ENCODE measurements at regions of chr1 and their contacts with region 1.

Region 1: DNA sequence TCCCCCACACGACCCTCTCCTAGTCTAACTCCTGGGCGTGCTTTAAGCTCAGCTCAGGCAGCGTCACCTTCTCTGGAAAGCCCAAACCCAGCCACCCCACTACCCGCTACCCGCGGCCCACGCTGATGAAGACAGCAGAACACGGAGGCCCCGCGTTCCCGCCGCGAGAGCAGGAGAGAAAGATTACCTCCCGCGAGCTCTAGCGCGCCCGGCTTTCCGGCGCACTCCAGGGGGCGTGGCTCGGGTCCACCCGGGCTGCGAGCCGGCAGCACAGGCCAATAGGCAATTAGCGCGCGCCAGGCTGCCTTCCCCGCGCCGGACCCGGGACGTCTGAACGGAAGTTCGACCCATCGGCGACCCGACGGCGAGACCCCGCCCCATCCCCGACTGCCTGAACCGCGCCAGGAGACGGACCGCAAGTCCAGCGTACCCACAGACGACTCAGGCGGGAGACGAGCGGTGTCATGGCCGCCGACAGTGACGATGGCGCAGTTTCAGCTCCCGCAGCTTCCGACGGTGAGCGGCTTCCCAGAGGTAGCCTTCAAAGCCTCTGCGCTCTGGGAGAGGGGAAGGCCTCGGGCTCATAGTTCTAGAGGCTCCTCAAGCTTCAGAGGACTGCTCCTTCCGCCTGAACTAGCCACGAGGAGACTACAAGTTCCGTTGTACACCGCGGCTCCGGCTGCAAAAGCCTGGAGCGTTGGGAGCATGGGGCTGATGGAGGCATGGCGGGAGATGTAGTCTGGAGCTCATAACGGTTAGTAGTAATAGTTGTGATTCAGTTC is at the starts of genes MUTYH and TOE1:
- DNase-seq: peak; percentile 88 to 95
- H3K4me3 ChIP-seq: peak within 1 kb of the TSS; percentile 84 to 97 (median 92)
- H3K27ac ChIP-seq: peak within 1 kb of the TSS; percentile 97
- H3K4me1 ChIP-seq: peaks cover 0 to 9% (median 6%) of the 10 kb centered on the region in 4 experiments; a peak in 6 of 7 replicates
- H3K27me3 ChIP-seq: no peaks in the 10 kb centered on the region
- CTCF ChIP-seq: no peak
- EP300 ChIP-seq: no peak
- POLR2A ChIP-seq: peak; percentile 94 to 96
- RAD21 ChIP-seq: no peak
- total RNA-seq, gene MUTYH: 51.9 TPM in 2 replicates
- total RNA-seq, gene TOE1: 14.5 and 15.2 TPM in 2 replicates

Region 2: GRCh38 chr1:45326627-45327623 is 13.1 kb before region 1 on chr1 and contains the start of gene HPDL:
- CTCF ChIA-PET with region 1: interaction called, 21 read pairs
- POLR2A ChIA-PET with region 1: interaction called, 472 read pairs
- DNase-seq: peak; percentile 64 to 85
- H3K4me3 ChIP-seq: peak within 1 kb of the TSS; percentile 61 to 69 (median 64)
- H3K27ac ChIP-seq: peak within 1 kb of the TSS; percentile 65; the same call in 1 of the 2 replicates
- H3K4me1 ChIP-seq: peaks cover 8 to 24% (median 14%) of the 10 kb centered on the region in 4 experiments; a peak in 6 of 7 replicates
- H3K27me3 ChIP-seq: no peaks in the 10 kb centered on the region
- CTCF ChIP-seq: no peak
- EP300 ChIP-seq: peak in 1 of 2 experiments; percentile 15; a peak in 1 of 3 replicates
- POLR2A ChIP-seq: peak; percentile 77 to 100
- RAD21 ChIP-seq: peak; percentile 14 to 23; a peak in 1 of 4 replicates
- total RNA-seq, gene HPDL: 58.5 and 60.6 TPM in 2 replicates

Region 3: DNA sequence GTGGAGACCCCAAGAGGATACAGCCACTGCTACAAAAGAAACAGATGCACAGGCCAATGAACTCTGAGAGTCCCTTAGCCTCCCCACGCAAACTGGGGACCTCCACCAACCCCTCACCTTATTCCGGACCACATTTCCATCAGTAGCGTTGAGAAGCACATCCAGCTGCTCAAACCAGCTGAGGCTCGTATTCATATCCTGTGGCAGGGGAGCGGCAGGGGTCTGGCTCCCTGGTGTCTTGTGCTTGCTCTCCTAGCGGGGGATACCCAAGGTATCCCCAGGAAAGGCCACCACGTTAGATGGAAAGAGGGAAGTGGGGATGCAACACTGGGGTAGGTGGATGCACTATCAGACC is 159.4 kb after region 1 on chr1:
- CTCF ChIA-PET with region 1: interaction called, 54 read pairs
- POLR2A ChIA-PET with region 1: interaction called, 23 read pairs
- DNase-seq: no peak
- H3K4me3 ChIP-seq: peak overlapping the region; percentile 65 to 86 (median 72)
- H3K27ac ChIP-seq: no peak overlapping the region
- H3K4me1 ChIP-seq: peaks cover 0 to 10% (median 3%) of the 10 kb centered on the region in 4 experiments; a peak in 6 of 7 replicates
- H3K27me3 ChIP-seq: no peaks in the 10 kb centered on the region
- CTCF ChIP-seq: no peak
- EP300 ChIP-seq: no peak
- POLR2A ChIP-seq: no peak
- RAD21 ChIP-seq: no peak

Region 4: GRCh38 chr1:45521398-45522323 is 181.7 kb after region 1 on chr1 and contains the start of gene PRDX1:
- CTCF ChIA-PET with region 1: no interaction called
- POLR2A ChIA-PET with region 1: interaction called, 32 read pairs
- DNase-seq: peak; percentile 91 to 99
- H3K4me3 ChIP-seq: peak within 1 kb of the TSS; percentile 96 to 100 (median 98)
- H3K27ac ChIP-seq: peak within 1 kb of the TSS; percentile 91
- H3K4me1 ChIP-seq: peaks cover 2 to 12% (median 5%) of the 10 kb centered on the region in 4 experiments; a peak in 5 of 7 replicates
- H3K27me3 ChIP-seq: no peaks in the 10 kb centered on the region
- CTCF ChIP-seq: peak in 1 of 3 experiments; percentile 11; a peak in 1 of 4 replicates
- EP300 ChIP-seq: peak in 1 of 2 experiments; percentile 82; a peak in 1 of 3 replicates
- POLR2A ChIP-seq: peak; percentile 100
- RAD21 ChIP-seq: no peak; a peak in 1 of 4 replicates
- total RNA-seq, gene PRDX1: 1,354 and 1,418 TPM in 2 replicates